Cardiac septum (tissue), 1 donor: ENCODE measurements at regions of chr2 and their contacts with region 1.

Region 1: GRCh38 chr2:194616334-194616733 is 1040.7 kb upstream of the SLC39A10 start:
- DNase-seq: no peak

Region 2: DNA sequence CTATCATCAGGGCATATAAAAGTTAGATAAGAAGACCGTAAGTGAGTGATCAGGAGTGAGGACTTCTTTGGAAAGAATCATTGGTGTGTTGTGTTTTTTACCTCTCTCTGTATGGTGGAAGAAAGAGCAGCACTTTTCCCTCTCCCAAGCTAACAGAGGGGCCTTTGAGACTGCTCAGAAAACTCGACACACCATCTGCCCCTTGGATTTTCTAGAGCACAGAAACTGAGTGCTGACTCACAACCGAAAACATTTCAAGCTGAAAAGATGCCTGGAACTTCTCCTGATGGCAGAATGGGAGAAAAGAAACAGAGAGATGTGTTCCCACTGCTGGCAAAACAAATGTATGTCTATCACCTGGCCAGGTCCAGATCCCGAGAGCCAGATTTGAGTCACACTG is 1295.7 kb after region 1 on chr2:
- intact Hi-C with region 1: loop called (anchors 10 kb)
- DNase-seq: no peak